Activated CD8-positive, alpha-beta memory T cell treated with anti-CD3 and anti-CD28 coated beads, Interleukin-2, amount 10 ng/mL, durations not matched to agents 7 days and 5 days (primary cell): ENCODE measurements at regions of chr2 and their contacts with region 1.

Region 1: DNA sequence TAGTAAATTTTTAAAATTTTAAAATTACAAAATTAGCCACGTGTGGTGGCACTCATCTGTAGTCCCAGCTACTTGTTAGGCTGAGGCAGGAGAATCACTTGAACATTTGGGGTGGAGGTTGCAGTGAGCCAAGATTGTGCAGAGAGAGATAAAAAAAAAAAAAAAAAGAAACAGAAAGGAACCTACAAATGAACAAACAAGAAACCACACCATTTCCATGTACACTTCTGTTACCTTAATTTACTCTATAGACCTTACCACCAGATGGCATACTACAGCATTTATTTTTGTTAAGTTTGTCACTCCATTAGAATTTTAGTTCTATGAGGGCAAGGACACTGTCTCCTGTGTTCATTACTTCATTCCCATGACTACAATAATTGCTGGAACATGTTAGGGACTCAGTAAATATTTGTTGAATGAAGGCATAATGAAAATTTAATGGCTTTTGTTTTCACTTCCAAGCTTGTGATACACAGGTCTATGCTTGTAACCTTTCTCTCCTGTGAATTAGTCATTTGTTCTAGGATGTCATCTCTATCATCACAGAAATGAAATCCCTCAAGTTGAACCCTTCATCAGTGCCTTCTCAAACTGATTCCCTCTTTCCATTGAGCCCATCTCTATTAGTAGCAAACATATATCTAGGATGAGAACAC is 76.0 kb downstream of the ARHGAP15 start:
- DNase-seq: no peak
- ATAC-seq: peak; percentile 82
- H3K4me3 Mint-ChIP-seq: no peak overlapping the region
- H3K27ac Mint-ChIP-seq: peak overlapping the region; percentile 75
- H3K4me1 Mint-ChIP-seq: peaks cover 38% of the 10 kb centered on the region
- H3K27me3 Mint-ChIP-seq: no peaks in the 10 kb centered on the region

Region 2: DNA sequence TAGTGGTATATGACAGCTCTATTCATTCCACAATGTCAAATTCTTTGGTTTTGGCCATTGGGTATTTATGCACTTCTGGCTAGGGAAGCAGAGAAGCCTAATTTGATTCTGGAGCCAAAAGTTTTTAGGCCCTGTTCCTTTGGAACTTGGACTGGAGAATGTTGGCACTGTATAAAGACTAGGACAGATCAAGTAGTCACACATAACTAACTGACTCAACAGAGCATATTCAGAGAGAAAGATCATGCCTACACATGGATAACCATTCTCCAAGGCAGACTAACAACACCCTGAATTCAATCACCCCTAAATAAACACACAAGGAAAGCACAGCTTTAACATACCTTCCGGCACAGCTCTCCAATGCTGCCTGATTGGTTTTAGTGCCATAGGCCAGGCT is 13.1 kb before region 1 on chr2:
- CTCF ChIA-PET with region 1: interaction called, 11 read pairs
- DNase-seq: no peak
- ATAC-seq: no peak
- H3K4me3 Mint-ChIP-seq: no peak overlapping the region
- H3K27ac Mint-ChIP-seq: no peak overlapping the region
- H3K4me1 Mint-ChIP-seq: peaks cover 7% of the 10 kb centered on the region
- H3K27me3 Mint-ChIP-seq: no peaks in the 10 kb centered on the region